ENCODE measurements at regions of chr4 and their contacts with region 1.

Region 1: DNA sequence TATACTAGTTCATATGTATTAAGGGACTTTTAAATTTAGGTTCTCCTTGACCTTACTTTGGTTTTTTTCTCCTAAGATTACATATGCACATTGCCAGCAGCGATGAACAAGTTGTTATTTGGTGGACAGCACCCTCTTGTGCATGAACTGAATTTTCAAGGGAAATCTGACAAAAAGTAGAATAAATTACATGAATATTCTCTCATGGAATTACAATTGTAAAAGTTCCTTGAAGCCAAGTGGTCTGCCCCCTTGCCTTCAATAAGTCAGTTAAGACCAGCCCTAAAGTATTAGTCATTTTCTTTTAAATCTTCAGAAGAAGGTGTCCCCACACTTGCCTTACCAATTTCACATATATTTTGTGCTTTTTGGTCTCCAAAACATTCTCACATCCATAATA is 30.7 kb upstream of the SMARCA5 start:
- DNase-seq: peak; percentile 25
- ATAC-seq: no peak
- H3K4me3 Mint-ChIP-seq: no peak overlapping the region
- H3K27ac Mint-ChIP-seq: no peak overlapping the region
- H3K4me1 Mint-ChIP-seq: no peaks in the 10 kb centered on the region
- H3K27me3 Mint-ChIP-seq: peaks cover 11% of the 10 kb centered on the region

Region 2: GRCh38 chr4:143163618-143164017 is 319.2 kb before region 1 on chr4:
- CTCF ChIA-PET with region 1: no interaction called
- POLR2A ChIA-PET with region 1: no interaction called
- intact Hi-C with region 1: no loop called
- DNase-seq: no peak
- ATAC-seq: no peak
- H3K4me3 Mint-ChIP-seq: no peak overlapping the region
- H3K27ac Mint-ChIP-seq: no peak overlapping the region
- H3K4me1 Mint-ChIP-seq: no peaks in the 10 kb centered on the region
- H3K27me3 Mint-ChIP-seq: no peaks in the 10 kb centered on the region

Region 3: DNA sequence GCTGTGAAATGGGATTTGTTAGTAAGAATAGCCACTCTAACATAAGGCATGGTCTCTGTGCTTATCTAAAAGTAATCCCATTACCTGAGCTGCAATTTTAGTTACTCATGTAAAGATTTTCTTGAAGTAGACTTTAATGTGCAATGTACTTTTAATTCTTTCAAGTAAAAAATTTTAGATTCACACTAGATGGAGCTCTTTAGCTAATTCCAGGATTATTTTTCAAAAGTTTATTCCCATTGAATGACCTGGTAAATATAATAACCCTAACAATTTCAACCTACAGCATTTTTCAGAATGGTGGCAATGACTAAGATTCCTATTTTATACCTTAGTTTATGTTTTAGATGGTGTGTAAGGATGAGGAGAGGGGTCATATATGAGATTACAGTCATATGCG is 280.0 kb before region 1 on chr4:
- CTCF ChIA-PET with region 1: interaction called, 3 read pairs
- POLR2A ChIA-PET with region 1: no interaction called
- intact Hi-C with region 1: loop called in 1 of 2 experiments (anchors 5 kb)
- DNase-seq: no peak
- ATAC-seq: no peak
- H3K4me3 Mint-ChIP-seq: no peak overlapping the region
- H3K27ac Mint-ChIP-seq: no peak overlapping the region
- H3K4me1 Mint-ChIP-seq: peaks cover 15% of the 10 kb centered on the region
- H3K27me3 Mint-ChIP-seq: no peaks in the 10 kb centered on the region

Region 4: GRCh38 chr4:143375313-143376073 is 107.3 kb before region 1 on chr4:
- CTCF ChIA-PET with region 1: no interaction called
- POLR2A ChIA-PET with region 1: no interaction called
- intact Hi-C with region 1: loop called in 1 of 2 experiments (anchors 5 kb)
- DNase-seq: peak; percentile 33
- ATAC-seq: peak; percentile 70
- H3K4me3 Mint-ChIP-seq: no peak overlapping the region
- H3K27ac Mint-ChIP-seq: no peak overlapping the region
- H3K4me1 Mint-ChIP-seq: no peaks in the 10 kb centered on the region
- H3K27me3 Mint-ChIP-seq: no peaks in the 10 kb centered on the region

Region 5: DNA sequence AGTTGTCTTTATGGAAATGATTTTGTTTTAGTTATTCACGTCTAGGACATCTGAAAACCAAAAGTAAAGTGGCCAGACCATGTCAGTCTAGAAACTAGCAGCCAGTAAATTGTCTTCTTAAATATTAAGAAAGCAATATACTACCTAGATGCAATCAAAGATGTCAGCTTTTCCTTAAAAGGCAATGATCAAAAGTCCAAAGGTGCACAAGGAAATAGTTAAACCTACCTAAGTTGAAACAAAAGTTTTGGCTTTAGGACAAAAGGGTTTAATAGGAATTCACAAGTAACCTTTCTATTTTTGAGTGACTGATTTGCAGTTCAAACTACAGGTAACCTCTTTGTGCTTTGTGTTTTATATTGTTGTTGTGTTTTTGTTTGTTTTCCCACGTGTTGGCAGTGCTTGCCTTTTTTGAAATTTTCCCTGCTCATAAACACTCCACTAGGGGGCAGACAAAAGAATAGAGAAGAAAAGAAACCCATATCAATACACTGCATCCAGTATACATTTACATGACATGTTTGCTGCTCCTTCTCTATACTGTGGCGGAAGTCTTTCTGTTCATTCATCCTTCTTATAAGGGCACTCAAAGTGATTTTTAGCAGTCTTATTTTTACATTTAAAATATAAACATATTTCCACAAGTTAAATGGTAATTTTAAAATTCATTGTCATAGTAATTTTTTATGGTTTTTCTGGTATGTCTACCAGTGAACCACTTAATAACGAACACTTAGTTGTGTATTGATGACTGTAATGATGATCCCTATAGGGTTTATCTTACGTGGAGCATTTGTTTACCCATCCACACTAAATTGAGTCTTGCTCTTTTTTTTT is 83.5 kb before region 1 on chr4:
- CTCF ChIA-PET with region 1: no interaction called
- POLR2A ChIA-PET with region 1: no interaction called
- intact Hi-C with region 1: loop called in 1 of 2 experiments (anchors 5 kb)
- DNase-seq: no peak
- ATAC-seq: no peak
- H3K4me3 Mint-ChIP-seq: no peak overlapping the region
- H3K27ac Mint-ChIP-seq: no peak overlapping the region
- H3K4me1 Mint-ChIP-seq: peaks cover 9% of the 10 kb centered on the region
- H3K27me3 Mint-ChIP-seq: peaks cover 2% of the 10 kb centered on the region

Region 6: DNA sequence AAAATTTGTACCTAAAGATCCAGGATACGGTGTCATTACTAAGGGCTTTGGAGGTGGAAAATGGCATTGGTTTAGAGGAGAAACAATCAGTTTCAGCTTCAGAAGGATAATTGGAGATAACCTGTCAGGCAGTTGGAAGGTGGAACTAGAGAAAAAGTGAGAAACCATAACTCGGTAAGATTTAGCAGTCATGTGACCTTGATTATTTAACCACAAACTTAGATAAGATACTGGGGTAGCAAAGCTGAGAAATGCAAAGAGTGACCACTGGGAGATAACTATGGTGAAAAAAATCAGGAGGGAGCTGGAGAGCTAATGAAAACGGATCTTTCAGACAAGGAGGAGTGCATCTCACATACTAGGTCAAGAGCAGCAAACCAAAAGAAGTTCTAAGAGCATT is 27.6 kb before region 1 on chr4:
- CTCF ChIA-PET with region 1: no interaction called
- POLR2A ChIA-PET with region 1: no interaction called
- intact Hi-C with region 1: no loop called
- DNase-seq: no peak
- ATAC-seq: no peak
- H3K4me3 Mint-ChIP-seq: no peak overlapping the region
- H3K27ac Mint-ChIP-seq: no peak overlapping the region
- H3K4me1 Mint-ChIP-seq: no peaks in the 10 kb centered on the region
- H3K27me3 Mint-ChIP-seq: peaks cover 5% of the 10 kb centered on the region

Region 7: DNA sequence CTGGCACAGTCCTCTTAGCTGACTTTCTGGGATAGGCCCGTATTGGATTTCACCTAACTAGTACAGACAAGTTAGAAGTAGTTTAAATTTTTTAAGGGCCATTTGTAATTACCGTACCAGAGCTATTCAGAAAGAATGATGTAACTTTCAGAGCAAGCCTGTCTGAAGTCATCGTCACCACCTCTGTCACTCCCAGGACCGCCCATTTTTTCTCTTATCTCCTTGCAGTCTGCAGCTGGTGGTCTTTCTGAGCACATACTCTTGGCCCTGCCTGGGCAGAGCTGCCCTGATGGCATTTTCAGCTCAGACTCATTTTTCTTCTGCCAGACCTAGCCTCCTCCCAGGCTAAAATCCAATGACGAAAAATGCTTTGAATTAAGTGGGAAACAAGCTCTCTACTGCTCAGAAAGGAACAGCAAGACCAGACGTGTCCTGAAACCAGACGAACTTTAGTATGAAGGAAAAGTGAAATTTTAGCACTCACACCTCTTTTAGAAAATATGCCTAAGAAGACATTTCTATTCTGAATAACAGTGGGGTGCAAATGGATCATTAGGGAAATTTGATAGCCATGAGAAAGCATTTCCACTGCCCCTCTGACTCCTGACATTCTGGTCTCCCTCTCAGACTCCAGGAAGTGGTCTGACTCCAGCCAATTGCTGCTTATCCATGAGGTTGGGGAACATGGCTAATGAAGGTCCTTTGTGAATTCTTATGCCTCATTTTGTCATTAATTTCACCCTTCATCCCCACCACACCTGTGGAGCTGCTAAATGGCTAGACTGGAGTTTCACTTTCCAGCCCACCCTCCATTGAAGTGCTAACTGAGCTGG is 820.1 kb after region 1 on chr4:
- CTCF ChIA-PET with region 1: no interaction called
- POLR2A ChIA-PET with region 1: no interaction called
- intact Hi-C with region 1: no loop called
- DNase-seq: no peak
- ATAC-seq: no peak
- H3K4me3 Mint-ChIP-seq: no peak overlapping the region
- H3K27ac Mint-ChIP-seq: no peak overlapping the region
- H3K4me1 Mint-ChIP-seq: no peaks in the 10 kb centered on the region
- H3K27me3 Mint-ChIP-seq: no peaks in the 10 kb centered on the region